CD8-positive, alpha-beta T cell (primary cell): ENCODE measurements at regions of chr10 and their contacts with region 1.

Region 1: DNA sequence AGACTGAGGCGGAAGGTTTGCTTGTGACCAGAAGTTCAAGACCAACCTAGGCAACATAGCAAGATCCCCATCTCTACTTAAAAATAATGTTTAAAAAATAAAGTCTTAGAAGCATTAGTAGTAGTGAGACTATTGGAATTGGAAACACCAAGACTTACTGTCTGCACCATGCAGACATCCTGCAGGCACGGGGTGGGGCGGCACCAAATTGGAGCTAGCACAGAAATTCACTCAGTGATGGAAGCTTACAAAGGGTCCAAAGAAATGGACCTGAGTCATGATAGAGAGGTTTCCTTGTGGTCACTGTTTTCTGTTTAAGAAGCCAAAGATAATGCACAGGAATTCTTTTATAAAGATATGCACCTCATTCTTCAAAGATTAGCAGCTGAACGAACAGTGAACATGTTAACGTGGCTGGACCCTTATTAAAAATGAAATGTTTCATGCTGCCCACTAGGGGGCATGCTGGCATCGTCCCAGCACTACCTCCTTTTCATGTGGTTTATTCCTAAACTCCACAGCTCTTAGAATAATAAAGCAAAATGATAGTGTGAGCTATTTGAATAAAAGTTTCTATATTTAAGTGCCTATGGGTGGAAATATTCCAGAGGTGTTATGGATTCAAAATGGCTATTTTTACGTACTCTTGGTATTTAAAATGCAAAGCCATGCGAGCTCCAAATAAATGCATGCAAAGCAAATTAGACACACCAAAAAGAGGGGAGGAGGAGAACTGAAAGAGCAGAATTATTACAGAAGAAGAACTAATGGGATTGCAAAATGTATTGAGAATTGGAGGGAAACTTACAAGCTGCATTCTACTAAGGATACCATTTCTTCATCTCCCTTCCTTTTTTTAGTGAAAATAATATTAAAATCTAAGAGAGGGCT is 28.6 kb downstream of the PDSS1 start:
- DNase-seq: peak in 8 of 9 experiments; percentile 26 to 77 (median 48)
- ATAC-seq: peak; percentile 47
- H3K4me3 ChIP-seq: no peak overlapping the region
- H3K4me3 Mint-ChIP-seq: no peak overlapping the region
- H3K27ac ChIP-seq: no peak overlapping the region
- H3K27ac Mint-ChIP-seq: no peak overlapping the region
- H3K4me1 ChIP-seq: peaks cover 5% of the 10 kb centered on the region
- H3K4me1 Mint-ChIP-seq: peaks cover 12% of the 10 kb centered on the region
- H3K27me3 ChIP-seq: no peaks in the 10 kb centered on the region
- H3K27me3 Mint-ChIP-seq: no peaks in the 10 kb centered on the region
- CTCF ChIP-seq: peak; percentile 99

Region 2: GRCh38 chr10:26682931-26683330 is 43.2 kb before region 1 on chr10:
- CTCF ChIA-PET with region 1: interaction called, 3 read pairs
- POLR2A ChIA-PET with region 1: no interaction called
- intact Hi-C with region 1: loop called in 1 of 2 experiments (anchors 5 kb)
- DNase-seq: peak in 2 of 9 experiments; percentile 52 to 74
- ATAC-seq: peak; percentile 82
- H3K4me3 ChIP-seq: peak overlapping the region in 1 of 2 experiments; percentile 22
- H3K4me3 Mint-ChIP-seq: peak overlapping the region; percentile 35
- H3K27ac ChIP-seq: peak overlapping the region; percentile 56 to 61
- H3K27ac Mint-ChIP-seq: peak overlapping the region; percentile 92
- H3K4me1 ChIP-seq: peaks cover 36% of the 10 kb centered on the region
- H3K4me1 Mint-ChIP-seq: peaks cover 37% of the 10 kb centered on the region
- H3K27me3 ChIP-seq: no peaks in the 10 kb centered on the region
- H3K27me3 Mint-ChIP-seq: no peaks in the 10 kb centered on the region
- CTCF ChIP-seq: no peak

Region 3: GRCh38 chr10:26714415-26715136 is 11.5 kb before region 1 on chr10:
- CTCF ChIA-PET with region 1: interaction called, 16 read pairs
- POLR2A ChIA-PET with region 1: no interaction called
- intact Hi-C with region 1: no loop called
- DNase-seq: no peak
- ATAC-seq: no peak
- H3K4me3 ChIP-seq: no peak overlapping the region
- H3K4me3 Mint-ChIP-seq: no peak overlapping the region
- H3K27ac ChIP-seq: no peak overlapping the region
- H3K27ac Mint-ChIP-seq: no peak overlapping the region
- H3K4me1 ChIP-seq: no peaks in the 10 kb centered on the region
- H3K4me1 Mint-ChIP-seq: no peaks in the 10 kb centered on the region
- H3K27me3 ChIP-seq: no peaks in the 10 kb centered on the region
- H3K27me3 Mint-ChIP-seq: no peaks in the 10 kb centered on the region
- CTCF ChIP-seq: no peak

Region 4: DNA sequence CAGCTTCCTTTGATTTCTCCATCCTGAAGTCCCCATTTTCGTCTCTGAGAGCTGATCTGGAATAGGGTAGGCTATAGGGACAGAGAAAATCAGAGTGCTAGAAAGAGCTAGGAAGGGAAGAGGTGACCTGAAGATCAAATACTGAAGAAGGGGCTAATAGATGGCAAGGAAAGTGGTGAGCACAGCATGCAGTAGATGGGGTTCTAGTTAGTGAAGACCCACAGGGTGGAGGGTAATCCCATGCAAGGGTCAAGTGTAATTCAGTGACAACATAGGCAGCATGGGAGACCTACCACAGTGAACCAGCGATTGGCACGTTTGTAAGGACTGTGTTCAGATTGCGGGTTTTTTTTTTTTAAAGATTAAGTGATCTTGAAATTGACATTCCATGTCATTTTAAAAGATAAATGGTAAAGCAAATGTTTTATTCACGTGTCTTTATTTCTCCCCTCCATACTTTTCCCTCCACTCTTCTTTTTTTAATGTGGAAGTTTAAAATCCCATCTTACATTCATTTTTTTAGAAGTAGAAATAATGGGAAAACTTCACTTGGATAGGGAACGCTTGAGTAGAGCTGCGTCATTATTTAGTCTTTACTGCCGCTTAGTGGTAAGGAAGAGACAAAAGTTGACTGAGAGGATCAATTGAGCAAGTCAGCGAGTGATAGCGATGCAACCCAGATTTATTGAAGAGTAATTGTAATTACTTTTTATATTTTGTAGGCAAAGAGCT is 155.7 kb after region 1 on chr10:
- CTCF ChIA-PET with region 1: interaction called, 164 read pairs
- POLR2A ChIA-PET with region 1: interaction called, 4 read pairs
- intact Hi-C with region 1: loop called (anchors 1 kb)
- DNase-seq: peak in 2 of 9 experiments; percentile 68 to 71
- ATAC-seq: peak; percentile 64
- H3K4me3 ChIP-seq: no peak overlapping the region
- H3K4me3 Mint-ChIP-seq: no peak overlapping the region
- H3K27ac ChIP-seq: no peak overlapping the region
- H3K27ac Mint-ChIP-seq: no peak overlapping the region
- H3K4me1 ChIP-seq: no peaks in the 10 kb centered on the region
- H3K4me1 Mint-ChIP-seq: peaks cover 3% of the 10 kb centered on the region
- H3K27me3 ChIP-seq: peaks cover 0 to 2% of the 10 kb centered on the region in 2 experiments
- H3K27me3 Mint-ChIP-seq: peaks cover 23% of the 10 kb centered on the region
- CTCF ChIP-seq: peak; percentile 70

Region 5: DNA sequence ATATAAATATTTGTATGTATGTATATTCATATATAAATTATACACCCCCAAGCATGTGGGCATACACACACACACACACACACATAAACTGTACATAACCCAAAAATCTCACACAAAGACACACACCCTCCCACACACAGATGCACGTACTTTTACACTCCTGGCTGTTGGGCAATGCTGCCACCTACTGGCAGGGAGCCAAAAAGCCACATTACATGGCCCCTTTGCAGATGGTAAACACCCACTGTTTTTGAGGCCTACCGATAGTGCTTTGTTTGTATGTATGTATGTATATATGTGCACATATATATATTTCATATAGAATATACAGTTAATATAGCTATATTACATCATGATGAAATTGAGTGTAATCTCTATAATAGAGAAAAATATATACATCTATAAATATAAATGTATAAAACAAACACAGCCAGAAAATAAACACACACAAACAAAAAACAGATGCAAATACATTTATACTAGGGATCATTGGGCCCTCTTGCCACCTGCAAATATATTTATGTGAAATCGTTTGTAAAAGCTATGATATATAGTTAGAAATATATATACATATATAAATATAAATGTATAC is 634.6 kb after region 1 on chr10:
- CTCF ChIA-PET with region 1: no interaction called
- POLR2A ChIA-PET with region 1: no interaction called
- intact Hi-C with region 1: loop called (anchors 2 kb)
- DNase-seq: peak; percentile 63 to 89 (median 83)
- ATAC-seq: peak; percentile 99
- H3K4me3 ChIP-seq: no peak overlapping the region
- H3K4me3 Mint-ChIP-seq: no peak overlapping the region
- H3K27ac ChIP-seq: no peak overlapping the region
- H3K27ac Mint-ChIP-seq: no peak overlapping the region
- H3K4me1 ChIP-seq: no peaks in the 10 kb centered on the region
- H3K4me1 Mint-ChIP-seq: no peaks in the 10 kb centered on the region
- H3K27me3 ChIP-seq: no peaks in the 10 kb centered on the region
- H3K27me3 Mint-ChIP-seq: no peaks in the 10 kb centered on the region
- CTCF ChIP-seq: peak; percentile 99